OCI-LY7 (cell line): ENCODE measurements at regions of chr20 and their contacts with region 1.

Region 1: GRCh38 chr20:25065625-25066338 is 7.8 kb upstream of the ACSS1 start:
- DNase-seq: peak; percentile 62
- H3K4me3 ChIP-seq: no peak overlapping the region
- H3K27ac ChIP-seq: no peak overlapping the region
- H3K4me1 ChIP-seq: no peaks in the 10 kb centered on the region
- CTCF ChIP-seq: peak; percentile 86

Region 2: GRCh38 chr20:24823989-24824693 is 241.6 kb before region 1 on chr20:
- CTCF ChIA-PET with region 1: no interaction called
- POLR2A ChIA-PET with region 1: no interaction called
- intact Hi-C with region 1: no loop called
- DNase-seq: no peak
- H3K4me3 ChIP-seq: no peak overlapping the region
- H3K27ac ChIP-seq: no peak overlapping the region
- H3K4me1 ChIP-seq: no peaks in the 10 kb centered on the region
- CTCF ChIP-seq: no peak

Region 3: DNA sequence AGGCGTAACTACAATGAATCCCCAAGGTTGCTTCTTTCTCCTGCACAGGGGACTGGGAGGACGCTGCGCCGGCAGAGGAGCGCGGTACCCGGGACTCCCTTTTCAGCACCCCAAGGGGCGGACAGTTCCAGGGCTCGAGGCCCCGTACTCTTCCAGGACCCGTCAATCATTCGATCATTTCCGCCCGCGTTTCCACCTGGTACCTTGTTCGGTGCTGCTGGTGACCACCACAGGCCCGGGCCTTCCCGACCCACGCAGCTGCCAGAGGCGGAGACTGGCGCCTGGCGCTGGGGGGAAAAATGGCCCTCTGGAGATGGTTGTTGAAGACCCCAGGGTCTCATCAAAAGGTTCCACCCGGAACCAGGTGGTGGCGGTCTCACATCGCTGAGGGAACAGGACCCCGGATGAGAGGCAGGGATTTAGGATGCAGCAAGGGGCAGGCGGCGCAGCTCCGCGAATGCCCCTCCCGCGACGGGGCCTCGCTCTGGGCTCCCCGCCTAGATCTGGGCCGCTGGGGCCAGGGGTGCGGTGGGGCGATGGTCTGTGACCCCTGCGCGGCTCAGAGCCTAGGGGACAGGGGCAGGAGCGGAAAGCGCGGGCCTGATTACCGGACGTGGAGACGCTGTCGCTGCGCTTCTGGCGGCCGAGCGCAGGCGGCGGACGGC is 15.4 kb after region 1 on chr20:
- CTCF ChIA-PET with region 1: no interaction called
- POLR2A ChIA-PET with region 1: no interaction called
- intact Hi-C with region 1: no loop called
- DNase-seq: no peak
- H3K4me3 ChIP-seq: no peak overlapping the region
- H3K27ac ChIP-seq: no peak overlapping the region
- H3K4me1 ChIP-seq: no peaks in the 10 kb centered on the region
- CTCF ChIP-seq: no peak

Region 4: GRCh38 chr20:25178563-25179438 is 113.0 kb after region 1 on chr20:
- CTCF ChIA-PET with region 1: no interaction called
- POLR2A ChIA-PET with region 1: no interaction called
- intact Hi-C with region 1: loop called (anchors 10 kb)
- DNase-seq: peak; percentile 37
- H3K4me3 ChIP-seq: no peak overlapping the region
- H3K27ac ChIP-seq: no peak overlapping the region
- H3K4me1 ChIP-seq: no peaks in the 10 kb centered on the region
- CTCF ChIP-seq: peak; percentile 84

Region 5: DNA sequence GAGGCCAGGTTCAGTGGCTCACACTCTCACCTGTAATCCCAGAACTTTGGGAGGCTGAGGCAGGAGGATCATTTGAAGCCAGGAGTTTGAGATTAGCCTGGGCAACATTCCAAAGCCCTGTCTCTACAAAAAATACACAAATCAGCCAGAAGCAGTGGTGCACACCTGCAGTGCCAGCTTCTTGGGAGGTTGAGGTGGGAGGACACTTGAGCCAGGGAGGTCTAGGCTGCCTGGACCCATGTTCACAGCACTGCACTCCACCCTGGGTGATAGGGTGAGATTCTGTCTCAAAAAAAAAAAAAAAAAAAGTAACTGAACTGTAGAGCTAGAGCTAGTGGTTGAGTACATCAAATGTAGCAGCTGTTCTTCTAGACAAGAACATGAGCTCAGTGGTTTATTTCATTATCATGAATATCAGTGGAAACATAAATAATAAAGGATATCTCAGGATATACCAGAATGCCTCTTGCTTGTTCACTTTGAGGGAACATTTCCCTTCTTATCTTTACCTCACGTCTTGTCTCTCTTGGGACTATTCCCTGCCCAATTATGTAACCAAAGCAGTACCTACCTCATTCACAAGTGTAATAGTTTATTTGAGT is 540.4 kb after region 1 on chr20:
- CTCF ChIA-PET with region 1: no interaction called
- POLR2A ChIA-PET with region 1: no interaction called
- intact Hi-C with region 1: no loop called
- DNase-seq: no peak
- H3K4me3 ChIP-seq: no peak overlapping the region
- H3K27ac ChIP-seq: no peak overlapping the region
- H3K4me1 ChIP-seq: no peaks in the 10 kb centered on the region
- CTCF ChIP-seq: no peak